ENCODE measurements at regions of chr15 and their contacts with region 1.

Region 1: DNA sequence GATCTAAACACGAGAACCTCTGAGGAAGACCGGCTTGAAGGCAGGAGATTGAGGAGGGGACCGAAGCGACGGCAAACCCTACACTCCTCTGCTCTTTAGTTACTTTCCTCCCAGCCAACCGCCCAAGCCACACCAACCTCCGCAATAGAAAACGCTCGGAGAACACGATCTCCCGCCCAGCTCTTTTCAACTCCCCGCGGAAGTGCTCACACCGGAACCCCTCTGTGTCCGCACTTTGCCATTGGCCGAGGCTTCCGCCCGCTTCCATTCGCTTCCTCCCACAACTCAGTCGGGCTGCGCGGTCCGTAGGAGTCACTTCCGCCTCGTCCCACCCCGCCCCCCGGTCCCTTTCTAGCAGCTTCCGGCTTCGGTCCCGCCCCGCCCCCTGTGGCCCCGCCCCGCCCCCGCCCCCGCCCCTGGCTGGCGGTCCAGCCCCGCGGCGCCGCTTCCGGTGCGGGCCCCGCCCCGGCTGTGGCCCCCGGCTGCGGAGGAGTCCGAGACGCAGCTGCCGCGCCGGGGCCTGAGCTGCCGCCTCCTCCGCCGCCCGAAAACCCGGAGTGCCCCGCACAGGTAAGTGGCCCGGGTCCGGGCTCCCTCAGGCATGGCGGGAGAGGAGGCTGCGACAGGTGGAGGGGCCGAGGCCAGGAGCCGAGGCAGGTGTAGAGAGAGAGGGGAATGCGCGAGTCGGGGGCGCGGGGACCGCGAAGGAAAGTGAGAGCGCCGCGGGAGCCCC is at the start of gene ARID3B:
- DNase-seq: peak; percentile 92 to 98
- H3K4me3 ChIP-seq: peak within 1 kb of the TSS; percentile 96 to 98
- H3K27ac ChIP-seq: peak within 1 kb of the TSS; percentile 80 to 90
- H3K4me1 ChIP-seq: peaks cover 4 to 16% of the 10 kb centered on the region in 2 donors
- H3K27me3 ChIP-seq: no peaks in the 10 kb centered on the region
- CTCF ChIP-seq: no peak
- total RNA-seq, gene ARID3B: 13.3 TPM

Region 2: GRCh38 chr15:74228723-74229081 is 312.2 kb before region 1 on chr15:
- intact Hi-C with region 1: no loop called
- DNase-seq: no peak
- H3K4me3 ChIP-seq: no peak overlapping the region
- H3K27ac ChIP-seq: no peak overlapping the region
- H3K4me1 ChIP-seq: peaks cover 2 to 4% of the 10 kb centered on the region in 2 donors
- H3K27me3 ChIP-seq: no peaks in the 10 kb centered on the region
- CTCF ChIP-seq: no peak

Region 3: DNA sequence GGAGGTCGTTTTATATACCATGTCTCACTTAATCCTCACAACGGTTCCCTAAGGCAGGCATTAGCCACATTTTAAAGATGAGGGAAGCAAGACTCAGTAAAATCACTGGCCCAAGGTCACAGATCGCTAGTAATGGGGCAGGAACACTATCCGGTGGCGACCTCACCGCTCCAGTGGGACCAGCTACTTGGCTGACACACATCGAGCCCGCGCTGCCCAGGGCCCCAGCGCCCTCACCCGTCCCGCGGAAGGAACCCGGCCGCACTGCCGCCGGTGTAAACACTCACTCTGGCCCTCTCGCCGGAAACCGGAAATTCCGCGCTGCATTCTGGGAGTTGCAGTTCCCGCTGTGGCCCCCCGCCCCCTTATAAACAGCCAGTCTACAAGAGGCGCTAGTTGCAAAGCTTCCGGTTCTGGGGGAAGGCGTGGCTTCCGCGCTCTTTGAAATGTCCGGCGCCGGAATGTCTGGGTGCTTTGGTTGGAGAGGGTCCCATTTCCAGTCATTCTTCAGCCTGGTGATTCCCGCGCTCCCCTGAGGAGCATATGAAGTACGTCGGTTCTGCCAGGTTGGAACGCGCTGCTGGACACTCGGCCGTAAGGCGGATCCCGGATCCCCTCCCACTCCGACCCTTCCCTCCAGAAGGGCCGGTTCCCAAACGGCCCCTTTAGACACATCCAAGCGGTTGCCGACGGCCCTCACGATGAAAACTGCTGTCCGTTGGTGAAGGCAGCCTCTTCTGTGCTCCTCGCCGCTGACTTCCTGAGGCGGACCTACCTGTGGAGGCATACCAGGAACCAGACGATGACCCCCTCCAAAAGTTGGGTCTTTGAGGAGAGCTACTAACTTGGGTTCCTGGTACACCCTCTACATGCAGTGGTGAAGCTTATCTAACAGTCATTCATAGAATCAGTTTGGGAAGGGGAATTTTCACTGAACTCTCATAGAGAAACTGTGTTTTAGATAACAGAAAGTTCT is 79.8 kb before region 1 on chr15 and contains the start of gene UBL7:
- intact Hi-C with region 1: loop called (anchors 1 kb)
- DNase-seq: peak; percentile 95 to 99
- H3K4me3 ChIP-seq: peak within 1 kb of the TSS; percentile 65 to 70
- H3K27ac ChIP-seq: peak within 1 kb of the TSS; percentile 68 to 79
- H3K4me1 ChIP-seq: peaks cover 6 to 9% of the 10 kb centered on the region in 2 donors
- H3K27me3 ChIP-seq: no peaks in the 10 kb centered on the region
- CTCF ChIP-seq: peak in 1 of 3 experiments; percentile 21
- total RNA-seq, gene UBL7: 63.4 TPM

Region 4: DNA sequence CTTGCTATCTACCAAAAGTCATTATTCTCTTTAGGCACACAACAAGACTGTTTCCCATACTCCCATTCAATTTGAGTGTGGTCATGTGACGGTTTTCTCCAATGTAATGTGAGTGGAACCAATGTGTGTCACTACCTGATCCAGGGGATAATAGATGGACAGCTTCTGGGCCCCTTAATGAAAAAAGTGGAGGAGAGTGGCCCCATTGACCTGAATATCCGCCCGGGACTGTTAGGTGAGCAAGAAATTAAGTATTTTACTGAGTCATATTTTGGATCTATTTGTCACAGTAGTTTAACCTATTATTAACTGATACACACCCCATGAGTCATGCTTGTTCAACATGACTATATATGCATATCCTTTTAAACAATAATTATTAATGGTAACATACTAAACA is 15.0 kb before region 1 on chr15:
- intact Hi-C with region 1: no loop called
- DNase-seq: no peak
- H3K4me3 ChIP-seq: no peak overlapping the region
- H3K27ac ChIP-seq: no peak overlapping the region
- H3K4me1 ChIP-seq: no peaks in the 10 kb centered on the region
- H3K27me3 ChIP-seq: no peaks in the 10 kb centered on the region
- CTCF ChIP-seq: no peak

Region 5: DNA sequence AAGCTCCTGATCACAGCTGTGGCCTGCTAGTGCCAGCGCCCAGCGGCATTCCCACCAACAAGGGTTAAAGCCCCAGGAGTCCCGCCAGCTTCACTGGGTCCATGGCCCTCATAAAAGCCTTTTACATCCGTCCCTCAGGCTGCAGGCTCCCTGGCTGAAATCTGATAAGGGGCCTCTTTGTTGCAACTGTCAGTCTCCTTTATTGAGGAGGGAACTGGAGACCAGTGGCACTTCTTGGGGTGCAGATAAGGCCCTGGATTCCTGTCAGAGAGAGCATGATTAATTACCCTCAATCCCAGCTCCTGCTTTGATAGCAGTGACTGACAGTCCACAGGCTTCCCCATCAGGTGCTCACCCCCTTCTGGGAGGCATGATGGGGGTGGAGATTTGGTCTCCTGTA is 43.9 kb after region 1 on chr15:
- intact Hi-C with region 1: loop called (anchors 1 kb)
- DNase-seq: peak in 1 of 2 donors; percentile 43
- H3K4me3 ChIP-seq: no peak overlapping the region
- H3K27ac ChIP-seq: no peak overlapping the region
- H3K4me1 ChIP-seq: peaks cover 0 to 8% of the 10 kb centered on the region in 2 donors
- H3K27me3 ChIP-seq: no peaks in the 10 kb centered on the region
- CTCF ChIP-seq: no peak

Region 6: DNA sequence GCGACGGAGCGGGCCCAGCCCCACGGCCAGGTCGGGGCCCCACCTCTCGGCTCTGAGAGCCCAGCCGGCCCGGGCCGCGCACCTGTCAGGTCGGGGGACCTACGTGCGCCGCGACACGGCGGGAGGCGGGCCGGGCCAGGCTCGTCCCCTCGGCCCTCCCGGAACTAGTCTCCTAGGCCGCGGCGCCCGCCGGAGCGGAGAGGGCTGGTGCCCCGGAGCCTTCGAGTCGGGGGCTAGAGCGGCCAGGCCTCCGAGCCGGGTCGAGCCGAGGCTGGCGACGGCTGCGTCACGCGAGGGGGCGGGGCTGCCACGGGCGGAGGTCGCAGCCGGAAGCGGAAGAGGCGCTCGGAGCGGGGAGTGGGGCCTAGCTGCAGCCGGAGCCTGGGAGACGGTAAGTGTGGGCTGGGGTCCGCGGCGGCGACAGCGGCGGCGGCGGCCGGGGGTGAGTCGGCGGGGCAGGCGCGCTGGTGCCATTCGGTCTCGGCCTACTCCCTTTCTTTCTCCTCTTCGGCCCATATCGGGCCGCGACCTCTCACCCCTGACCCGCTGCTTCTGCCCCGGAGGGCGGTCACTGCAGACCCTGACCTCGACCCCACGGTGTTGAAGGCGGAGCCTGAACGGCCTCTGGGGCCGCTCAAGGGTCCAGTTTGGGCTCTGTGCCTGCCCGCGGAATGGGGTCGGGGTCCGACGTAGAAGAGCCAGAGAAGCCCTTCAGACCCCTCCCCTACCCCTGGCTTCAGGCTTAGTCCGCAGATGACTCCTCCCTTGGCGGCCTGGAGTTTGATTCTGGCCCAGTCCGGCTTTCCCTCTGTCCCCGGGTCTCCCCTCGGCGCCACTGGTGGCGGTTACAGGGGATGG is 74.8 kb after region 1 on chr15 and contains the start of gene CLK3:
- intact Hi-C with region 1: loop called (anchors 1 kb)
- DNase-seq: peak; percentile 76 to 98
- H3K4me3 ChIP-seq: peak within 1 kb of the TSS; percentile 76 to 86
- H3K27ac ChIP-seq: peak within 1 kb of the TSS; percentile 98 to 99
- H3K4me1 ChIP-seq: peaks cover 19 to 22% of the 10 kb centered on the region in 2 donors
- H3K27me3 ChIP-seq: no peaks in the 10 kb centered on the region
- CTCF ChIP-seq: no peak
- total RNA-seq, gene CLK3: 154 TPM

Region 7: DNA sequence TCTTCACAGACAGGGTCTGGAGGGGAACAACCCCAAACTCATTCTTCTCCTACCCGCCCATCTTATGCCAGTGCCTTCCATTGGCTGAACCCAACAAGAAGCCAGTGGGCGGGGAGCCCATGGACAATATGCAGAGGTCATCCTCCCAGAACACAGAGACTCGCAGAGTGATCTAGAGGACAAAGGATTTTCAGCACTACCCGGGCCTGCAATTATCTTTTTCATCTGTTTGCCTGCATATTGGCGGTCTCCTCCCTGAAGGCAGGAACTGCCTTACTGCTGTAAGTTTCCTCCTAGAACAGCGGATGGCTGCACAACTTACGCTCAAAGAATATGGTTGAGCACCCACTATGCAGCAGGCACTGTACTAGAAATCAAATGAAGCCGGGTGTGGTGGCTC is 199.0 kb after region 1 on chr15:
- intact Hi-C with region 1: no loop called
- DNase-seq: no peak
- H3K4me3 ChIP-seq: no peak overlapping the region
- H3K27ac ChIP-seq: no peak overlapping the region
- H3K4me1 ChIP-seq: no peaks in the 10 kb centered on the region
- H3K27me3 ChIP-seq: no peaks in the 10 kb centered on the region
- CTCF ChIP-seq: no peak

Region 8: DNA sequence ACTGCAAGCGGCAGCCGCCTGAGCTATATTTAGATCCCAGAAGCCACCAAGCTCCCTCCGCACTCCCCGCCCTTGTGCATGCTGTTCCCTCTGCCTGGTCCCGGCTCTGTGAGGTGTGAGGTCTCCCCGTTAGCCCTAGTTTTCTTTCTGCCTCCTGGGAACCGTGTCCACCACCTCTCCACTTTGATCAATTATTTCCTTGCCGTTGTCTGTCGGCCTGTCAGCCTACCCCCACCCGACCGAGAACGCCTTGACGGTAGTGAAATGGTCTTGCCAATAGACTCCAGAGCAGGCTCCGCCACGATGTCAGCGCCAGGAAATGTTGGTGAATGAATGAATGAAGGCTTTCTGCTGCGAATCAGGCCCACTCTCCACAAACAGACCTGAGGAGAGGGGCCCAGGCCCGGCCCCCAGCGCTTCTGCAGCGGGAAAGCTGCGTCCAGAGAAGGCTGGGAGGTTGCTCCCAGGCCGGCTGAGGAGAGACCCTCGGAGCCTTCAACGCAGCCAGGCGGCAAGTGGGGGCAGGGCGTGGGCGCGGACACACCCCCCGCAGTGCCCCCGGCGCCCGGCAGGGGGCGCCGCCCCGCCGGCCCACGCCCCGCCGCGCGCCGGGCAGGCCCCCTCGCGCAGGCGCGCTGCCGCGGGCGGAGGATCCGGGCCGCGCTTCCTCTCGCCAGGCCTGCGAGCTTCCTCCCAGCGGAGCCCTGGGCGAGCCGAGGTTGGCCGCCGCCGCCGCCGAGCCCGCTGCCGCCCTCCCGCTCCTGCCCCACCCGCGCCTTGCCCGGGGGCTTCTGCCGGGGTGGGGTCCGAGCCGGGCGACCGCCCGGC is 240.7 kb after region 1 on chr15 and contains the start of gene CSK:
- intact Hi-C with region 1: loop called (anchors 5 kb)
- DNase-seq: peak in 1 of 2 donors; percentile 80
- H3K4me3 ChIP-seq: peak within 1 kb of the TSS; percentile 89 to 95
- H3K27ac ChIP-seq: peak within 1 kb of the TSS; percentile 76 to 78
- H3K4me1 ChIP-seq: peaks cover 24 to 39% of the 10 kb centered on the region in 2 donors
- H3K27me3 ChIP-seq: no peaks in the 10 kb centered on the region
- CTCF ChIP-seq: peak; percentile 37 to 88 (median 52)
- total RNA-seq, gene CSK: 31.0 TPM